Activated naive CD4-positive, alpha-beta T cell treated with anti-CD3 and anti-CD28 coated beads for 36 hours (primary cell): ENCODE measurements at regions of chr5 and their contacts with region 1.

Region 1: DNA sequence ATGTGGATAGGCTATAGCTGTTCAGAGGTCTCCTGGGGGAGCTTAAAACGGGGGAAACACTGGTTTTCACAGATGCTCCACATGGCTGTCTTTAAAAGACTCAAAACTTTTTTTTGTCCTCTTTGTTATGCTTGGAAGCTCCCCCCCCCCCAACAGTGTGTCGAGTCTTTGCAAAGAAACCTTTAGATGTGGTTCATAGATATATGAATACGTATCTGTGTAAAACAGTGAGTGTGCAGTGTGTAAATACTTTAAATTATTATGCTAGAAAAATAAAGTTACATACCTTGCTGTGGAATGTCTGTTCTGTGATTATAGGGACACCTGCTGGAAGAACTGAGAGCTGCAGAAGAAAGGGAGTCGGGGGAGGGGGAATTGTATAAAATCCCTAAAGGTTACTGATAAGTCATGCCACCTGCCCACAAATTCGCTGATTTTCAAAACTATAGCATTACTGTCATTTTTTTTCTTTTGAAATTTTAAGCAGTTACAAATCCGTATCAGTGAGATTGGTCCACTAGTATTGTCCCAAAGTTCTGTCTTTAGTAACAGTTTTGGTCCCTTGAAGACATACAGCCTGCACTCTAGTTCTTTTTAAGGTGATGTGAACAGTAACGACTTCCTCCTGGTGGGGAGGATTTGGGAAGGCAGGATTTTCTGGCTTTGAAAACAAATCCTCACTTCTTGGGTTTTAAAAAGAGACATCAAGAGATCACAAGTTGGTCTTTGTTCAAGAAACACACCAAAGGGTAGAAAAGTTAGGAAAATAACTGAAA is 22.9 kb downstream of the RGMB start:
- DNase-seq: peak; percentile 79
- H3K4me3 Mint-ChIP-seq: no peak overlapping the region
- H3K27ac Mint-ChIP-seq: no peak overlapping the region
- H3K4me1 Mint-ChIP-seq: peaks cover 1% of the 10 kb centered on the region
- H3K27me3 Mint-ChIP-seq: no peaks in the 10 kb centered on the region

Region 2: DNA sequence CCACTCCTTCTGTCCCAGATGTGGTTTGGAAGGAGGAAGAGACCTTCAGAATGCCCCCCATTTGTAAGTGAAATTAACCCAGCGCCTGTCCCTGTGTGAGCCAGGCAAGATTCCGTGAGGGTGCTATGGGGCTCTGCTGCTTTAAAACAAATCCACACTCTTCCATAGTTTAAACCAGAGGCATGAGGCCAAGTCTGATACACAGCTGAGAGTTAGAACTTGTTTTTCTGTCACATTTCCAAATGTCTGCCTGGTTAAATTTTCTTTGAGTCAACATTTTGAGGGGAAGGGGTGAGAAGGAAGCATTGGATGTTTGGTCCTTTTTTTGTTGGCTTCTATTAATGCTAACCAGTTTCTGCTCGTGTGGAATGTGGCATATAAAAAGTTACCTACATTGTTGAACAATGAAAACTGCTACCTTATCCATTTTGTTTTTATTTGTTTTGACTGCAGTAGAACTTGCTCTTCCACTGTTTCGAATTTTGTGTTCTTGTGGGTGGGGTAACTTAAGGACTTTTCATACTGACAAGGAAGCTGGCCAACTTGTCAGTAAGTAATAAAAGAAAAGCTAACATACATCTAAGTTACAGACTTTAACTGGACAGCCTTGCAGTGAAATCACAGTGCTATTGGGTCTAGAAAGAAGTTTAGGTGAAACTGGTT is 10.1 kb before region 1 on chr5:
- CTCF ChIA-PET with region 1: interaction called, 13 read pairs
- intact Hi-C with region 1: no loop called
- DNase-seq: no peak
- H3K4me3 Mint-ChIP-seq: no peak overlapping the region
- H3K27ac Mint-ChIP-seq: no peak overlapping the region
- H3K4me1 Mint-ChIP-seq: peaks cover 44% of the 10 kb centered on the region
- H3K27me3 Mint-ChIP-seq: no peaks in the 10 kb centered on the region

Region 3: GRCh38 chr5:99076723-99077640 is 280.6 kb after region 1 on chr5:
- CTCF ChIA-PET with region 1: no interaction called
- intact Hi-C with region 1: no loop called
- DNase-seq: no peak
- H3K4me3 Mint-ChIP-seq: no peak overlapping the region
- H3K27ac Mint-ChIP-seq: no peak overlapping the region
- H3K4me1 Mint-ChIP-seq: peaks cover 2% of the 10 kb centered on the region
- H3K27me3 Mint-ChIP-seq: no peaks in the 10 kb centered on the region